CD4-positive, alpha-beta T cell (primary cell): ENCODE measurements at regions of chr4 and their contacts with region 1.

Region 1: DNA sequence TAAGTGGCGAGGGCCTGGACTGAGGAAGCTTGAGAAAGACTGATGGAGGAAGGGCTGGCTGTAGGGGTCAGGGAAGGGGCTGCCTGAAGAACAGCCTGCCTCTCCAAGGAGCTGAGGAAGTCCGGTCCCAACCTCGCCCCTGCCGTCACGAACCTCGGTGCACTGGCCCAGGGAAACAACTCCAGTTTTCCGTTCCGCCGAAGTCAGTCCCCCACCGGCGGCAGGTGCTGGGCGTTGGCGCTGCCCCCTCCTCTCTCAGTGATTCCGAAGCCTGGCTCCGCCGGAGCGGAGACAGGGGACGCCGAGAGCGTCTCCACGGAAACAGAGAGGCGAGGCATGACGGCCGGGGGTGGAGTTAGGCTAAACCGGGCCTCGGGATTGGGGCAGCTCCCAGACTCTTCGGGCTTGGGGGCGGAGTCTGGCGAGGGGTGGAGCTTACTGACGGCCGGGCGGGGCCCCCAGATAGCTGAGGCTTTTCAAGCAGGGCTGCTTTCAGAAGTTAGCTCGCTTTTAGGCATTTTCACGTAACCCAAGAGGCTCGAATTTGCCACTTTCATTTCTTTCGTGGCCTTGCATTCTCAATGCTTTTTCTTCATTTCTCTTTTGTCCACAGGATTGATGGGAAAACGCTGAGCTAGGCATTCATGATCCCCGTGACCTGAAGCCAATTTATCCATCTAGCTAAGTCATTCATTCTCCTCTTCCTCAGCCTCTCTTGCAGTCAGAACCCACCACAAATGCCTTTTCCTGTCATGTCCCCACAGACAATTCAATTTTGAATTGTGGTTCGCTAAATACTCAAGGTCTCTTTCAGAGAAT is at the start of gene TTC29:
- DNase-seq: peak; percentile 61 to 90 (median 80)
- ATAC-seq: peak; percentile 99
- H3K4me3 ChIP-seq: peak within 1 kb of the TSS; percentile 49
- H3K4me3 Mint-ChIP-seq: peak within 1 kb of the TSS; percentile 80
- H3K27ac ChIP-seq: no peak within 1 kb of the TSS
- H3K27ac Mint-ChIP-seq: no peak within 1 kb of the TSS
- H3K4me1 ChIP-seq: peaks cover 19% of the 10 kb centered on the region
- H3K4me1 Mint-ChIP-seq: peaks cover 32% of the 10 kb centered on the region
- H3K27me3 ChIP-seq: no peaks in the 10 kb centered on the region
- H3K27me3 Mint-ChIP-seq: no peaks in the 10 kb centered on the region
- CTCF ChIP-seq: no peak
- total RNA-seq, gene TTC29: not detected

Region 2: DNA sequence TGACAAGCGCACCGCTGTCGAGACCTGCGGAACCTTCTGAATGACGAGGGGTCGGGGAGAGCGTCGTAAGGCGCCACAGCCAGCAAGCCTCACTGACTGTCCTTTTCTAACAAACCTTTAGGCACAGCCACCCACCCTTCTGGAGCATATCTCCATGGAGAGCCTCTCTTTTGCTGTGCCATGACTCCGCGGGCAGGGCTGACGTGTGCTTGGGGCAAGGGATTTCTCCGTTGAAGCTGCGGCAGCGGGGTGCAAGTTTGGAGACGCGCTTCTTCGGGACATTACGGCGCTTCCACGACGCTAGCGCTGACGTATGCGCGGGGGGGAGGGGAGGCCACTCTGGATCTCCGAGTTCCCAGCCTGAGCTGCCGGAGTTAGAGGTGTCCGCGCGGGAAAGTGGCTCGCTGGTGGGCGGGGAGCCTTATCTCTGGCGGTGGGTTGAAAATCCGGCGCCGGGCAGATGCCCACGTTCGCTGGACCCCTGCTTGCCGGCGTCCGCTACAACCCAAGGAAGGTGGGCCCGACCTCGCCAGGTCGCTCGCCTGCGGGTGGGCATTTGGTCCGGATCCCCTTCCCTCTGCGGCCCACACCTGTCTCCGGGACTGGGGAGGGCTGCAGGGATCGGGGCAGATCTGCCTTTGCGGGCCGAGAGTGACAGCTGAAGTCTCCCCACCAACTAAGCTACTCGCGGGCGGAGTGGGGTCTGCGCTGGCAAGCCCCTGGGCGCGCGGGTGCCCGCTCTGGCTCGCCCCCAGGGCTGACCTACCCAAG is 423.5 kb before region 1 on chr4:
- CTCF ChIA-PET with region 1: no interaction called
- POLR2A ChIA-PET with region 1: no interaction called
- intact Hi-C with region 1: loop called in 1 of 2 experiments (anchors 10 kb)
- DNase-seq: peak; percentile 62 to 91 (median 79)
- ATAC-seq: peak; percentile 81
- H3K4me3 ChIP-seq: peak overlapping the region; percentile 89
- H3K4me3 Mint-ChIP-seq: no peak overlapping the region
- H3K27ac ChIP-seq: peak overlapping the region; percentile 59 to 62
- H3K27ac Mint-ChIP-seq: no peak overlapping the region
- H3K4me1 ChIP-seq: peaks cover 10% of the 10 kb centered on the region
- H3K4me1 Mint-ChIP-seq: peaks cover 30% of the 10 kb centered on the region
- H3K27me3 ChIP-seq: no peaks in the 10 kb centered on the region
- H3K27me3 Mint-ChIP-seq: no peaks in the 10 kb centered on the region
- CTCF ChIP-seq: no peak

Region 3: DNA sequence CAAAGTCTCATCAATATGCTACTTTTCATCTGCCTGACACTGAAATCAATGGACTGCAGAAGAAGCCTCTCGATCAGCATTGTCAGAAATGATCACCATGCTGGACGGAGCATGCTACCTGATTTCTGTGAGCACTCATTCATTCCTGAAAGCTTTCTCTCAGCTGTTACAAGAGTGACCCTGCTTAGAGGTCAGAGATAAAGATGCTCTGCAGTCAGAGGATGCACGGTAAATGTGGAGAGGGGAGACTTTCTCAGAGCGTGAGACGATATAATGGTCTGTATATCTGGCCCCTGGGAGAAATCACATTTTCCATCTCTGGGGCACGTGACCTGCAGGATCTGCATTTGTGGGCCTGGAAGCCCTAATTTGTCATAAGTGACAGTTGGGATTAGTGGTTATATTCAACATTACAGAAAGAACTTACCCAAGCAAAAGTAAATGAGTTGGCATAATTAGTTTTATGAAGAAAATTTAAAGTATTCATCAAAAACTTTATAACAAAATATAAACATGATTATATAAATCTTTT is 125.5 kb after region 1 on chr4:
- CTCF ChIA-PET with region 1: no interaction called
- POLR2A ChIA-PET with region 1: no interaction called
- intact Hi-C with region 1: no loop called
- DNase-seq: no peak
- ATAC-seq: no peak
- H3K4me3 ChIP-seq: no peak overlapping the region
- H3K4me3 Mint-ChIP-seq: no peak overlapping the region
- H3K27ac ChIP-seq: no peak overlapping the region
- H3K27ac Mint-ChIP-seq: no peak overlapping the region
- H3K4me1 ChIP-seq: no peaks in the 10 kb centered on the region
- H3K4me1 Mint-ChIP-seq: no peaks in the 10 kb centered on the region
- H3K27me3 ChIP-seq: peaks cover 0 to 5% of the 10 kb centered on the region in 2 experiments
- H3K27me3 Mint-ChIP-seq: peaks cover 29% of the 10 kb centered on the region
- CTCF ChIP-seq: no peak